Activated naive CD4-positive, alpha-beta T cell treated with anti-CD3 and anti-CD28 coated beads for 36 hours (primary cell): ENCODE measurements at regions of chr11 and their contacts with region 1.

Region 1: DNA sequence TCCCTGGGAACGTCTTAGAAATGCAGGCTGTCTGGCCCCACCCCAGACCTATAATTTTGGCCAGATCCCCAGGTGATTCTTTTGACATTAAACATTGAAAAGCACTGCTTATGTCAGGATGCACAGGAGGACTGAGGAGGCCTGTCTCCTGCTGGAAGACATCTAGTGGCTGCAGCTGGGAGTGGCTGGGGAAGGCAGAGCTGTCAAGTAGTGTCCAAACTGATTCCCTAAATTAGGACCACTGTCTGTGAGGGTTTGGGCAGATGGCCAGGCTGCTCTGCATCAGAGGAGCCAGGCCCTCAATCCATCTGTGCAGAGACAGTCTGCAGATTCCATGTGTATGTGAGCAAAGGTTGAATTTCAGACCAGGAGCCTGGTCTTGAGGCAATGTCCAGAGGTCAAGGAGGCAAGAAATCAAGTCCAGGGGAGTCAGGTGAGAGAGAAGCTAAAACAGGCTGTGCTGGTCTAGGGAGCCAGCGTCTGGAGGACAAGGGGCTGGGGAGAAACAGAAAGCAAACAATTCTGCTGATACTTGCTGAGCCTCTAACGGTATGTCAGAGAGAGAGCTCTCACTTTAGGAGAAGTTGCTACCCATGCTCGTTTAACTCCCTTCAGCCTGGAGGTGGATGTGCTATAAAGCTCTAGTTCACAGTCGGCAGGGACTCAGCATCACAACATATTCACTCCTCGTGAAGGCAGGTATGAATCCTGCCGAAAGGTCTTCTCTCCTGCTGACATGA is 15.3 kb upstream of the SYTL2 start:
- DNase-seq: peak; percentile 51
- H3K4me3 Mint-ChIP-seq: peak overlapping the region; percentile 28
- H3K27ac Mint-ChIP-seq: peak overlapping the region; percentile 20
- H3K4me1 Mint-ChIP-seq: peaks cover 57% of the 10 kb centered on the region
- H3K27me3 Mint-ChIP-seq: no peaks in the 10 kb centered on the region

Region 2: DNA sequence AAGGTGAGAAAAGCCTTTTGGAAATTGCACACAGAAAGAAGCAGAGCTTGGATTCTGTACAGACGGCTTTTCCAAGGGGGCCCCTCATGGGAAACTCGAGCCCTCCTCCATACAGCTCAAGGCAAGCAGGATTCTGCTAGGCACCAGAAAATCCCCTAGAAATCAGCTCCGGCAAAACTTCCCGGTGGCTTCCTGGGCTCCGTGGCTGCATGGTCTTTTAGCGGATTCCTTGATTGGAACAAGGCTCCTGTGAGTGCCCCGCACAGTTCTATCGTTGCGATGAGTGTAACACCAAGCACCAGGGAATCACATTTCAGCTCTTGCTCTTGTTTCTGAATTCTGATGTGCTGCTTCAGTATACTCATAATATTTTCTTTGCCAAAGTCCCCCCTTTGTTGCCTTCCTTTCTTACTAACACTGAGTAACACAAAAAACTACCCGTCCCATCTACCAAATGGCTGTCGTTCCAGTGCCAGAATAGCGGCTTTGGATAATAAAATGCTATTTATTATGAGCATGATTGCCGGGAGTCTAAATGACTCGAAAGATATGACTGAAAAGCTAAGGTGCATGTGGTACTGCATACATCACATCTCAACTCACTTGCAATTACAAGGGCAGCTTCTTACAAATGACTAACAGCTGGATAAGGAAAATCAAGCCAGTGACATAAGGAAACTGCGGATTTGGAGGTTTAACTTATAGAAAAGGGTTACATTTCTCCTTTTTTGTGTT is 693.3 kb before region 1 on chr11:
- CTCF ChIA-PET with region 1: no interaction called
- intact Hi-C with region 1: no loop called
- DNase-seq: no peak
- H3K4me3 Mint-ChIP-seq: no peak overlapping the region
- H3K27ac Mint-ChIP-seq: no peak overlapping the region
- H3K4me1 Mint-ChIP-seq: no peaks in the 10 kb centered on the region
- H3K27me3 Mint-ChIP-seq: no peaks in the 10 kb centered on the region

Region 3: DNA sequence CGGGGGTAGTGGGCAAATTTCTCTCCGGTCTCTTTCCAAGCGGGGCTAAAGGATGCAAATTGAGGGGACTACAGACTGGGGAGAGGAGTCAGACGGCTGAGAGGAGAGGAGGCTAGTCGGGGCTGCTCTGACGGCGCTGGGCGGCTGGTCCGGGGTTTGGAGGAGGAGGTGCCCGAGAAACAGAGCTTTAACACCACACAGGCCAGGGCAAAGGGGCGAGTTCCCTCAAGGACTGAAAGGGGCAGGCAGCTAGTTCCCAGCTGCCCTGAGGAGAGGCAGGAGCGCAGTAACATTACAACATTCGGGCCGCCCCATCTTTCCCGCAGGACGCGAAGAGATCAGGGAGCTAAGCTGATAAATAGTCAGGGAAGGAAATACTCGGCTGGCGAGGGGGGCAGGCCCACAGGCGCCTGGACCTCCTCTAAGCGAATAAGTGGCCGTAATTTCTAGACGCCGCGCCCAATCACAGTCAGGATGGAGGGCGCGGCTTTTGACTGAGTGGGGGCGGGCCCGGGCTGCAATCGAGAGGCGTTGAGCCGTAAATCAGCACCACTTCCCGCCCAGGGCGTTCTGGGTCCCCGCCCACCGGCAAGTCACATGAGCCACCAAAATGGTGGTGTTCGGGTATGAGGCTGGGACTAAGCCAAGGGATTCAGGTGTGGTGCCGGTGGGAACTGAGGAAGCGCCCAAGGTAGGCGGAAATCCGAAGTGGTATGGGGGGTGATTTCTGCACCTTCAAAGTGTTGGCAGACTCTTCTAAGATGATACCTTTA is 198.1 kb before region 1 on chr11 and contains the start of gene TMEM126B:
- CTCF ChIA-PET with region 1: no interaction called
- intact Hi-C with region 1: loop called (anchors 1 kb)
- DNase-seq: peak; percentile 98
- H3K4me3 Mint-ChIP-seq: peak within 1 kb of the TSS; percentile 99
- H3K27ac Mint-ChIP-seq: peak within 1 kb of the TSS; percentile 96
- H3K4me1 Mint-ChIP-seq: peaks cover 33% of the 10 kb centered on the region
- H3K27me3 Mint-ChIP-seq: no peaks in the 10 kb centered on the region
- total RNA-seq, gene TMEM126B: 72.6 to 79.0 TPM

Region 4: GRCh38 chr11:85694386-85694980 is 131.8 kb before region 1 on chr11:
- CTCF ChIA-PET with region 1: interaction called, 4 read pairs
- intact Hi-C with region 1: loop called (anchors 2 kb)
- DNase-seq: peak; percentile 16
- H3K4me3 Mint-ChIP-seq: no peak overlapping the region
- H3K27ac Mint-ChIP-seq: no peak overlapping the region
- H3K4me1 Mint-ChIP-seq: peaks cover 22% of the 10 kb centered on the region
- H3K27me3 Mint-ChIP-seq: no peaks in the 10 kb centered on the region

Region 5: DNA sequence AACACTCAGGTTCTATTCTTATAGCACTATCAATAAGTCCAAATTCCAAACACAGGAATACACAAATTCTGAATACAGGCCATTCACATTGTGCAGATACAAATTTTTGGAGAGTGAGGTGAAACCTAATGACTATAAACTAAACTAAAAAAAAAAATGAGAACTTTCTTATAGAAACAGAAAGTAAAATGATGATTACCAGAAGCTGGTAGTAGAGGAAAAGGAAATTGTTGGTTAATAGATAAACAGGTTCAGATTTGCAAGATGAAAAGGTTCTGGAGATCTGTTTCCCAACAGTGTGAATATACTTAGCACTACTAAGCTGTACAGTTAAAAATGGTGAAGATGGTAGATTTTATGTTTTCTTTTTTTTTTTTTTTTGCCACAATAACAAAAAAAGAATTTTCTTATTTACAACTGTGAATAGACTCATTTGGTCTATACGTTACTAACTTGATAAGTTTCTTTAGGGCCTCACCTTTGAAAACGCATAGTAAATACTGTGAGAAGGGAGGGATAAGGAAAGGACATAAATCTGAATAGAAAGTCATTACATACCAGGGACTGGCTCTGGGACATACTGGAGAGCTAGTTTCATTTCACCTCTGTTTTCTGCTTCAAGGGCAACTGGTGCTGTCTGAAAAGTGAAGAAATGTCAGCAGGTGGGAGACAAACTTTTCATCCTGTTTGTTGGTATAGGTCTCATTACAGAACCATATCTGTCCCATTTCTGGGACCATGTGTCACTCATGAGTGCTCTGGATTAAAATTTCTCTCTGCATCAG is 126.1 kb before region 1 on chr11:
- CTCF ChIA-PET with region 1: interaction called, 4 read pairs
- intact Hi-C with region 1: loop called (anchors 1 kb)
- DNase-seq: no peak
- H3K4me3 Mint-ChIP-seq: no peak overlapping the region
- H3K27ac Mint-ChIP-seq: peak overlapping the region; percentile 36
- H3K4me1 Mint-ChIP-seq: peaks cover 35% of the 10 kb centered on the region
- H3K27me3 Mint-ChIP-seq: no peaks in the 10 kb centered on the region

Region 6: DNA sequence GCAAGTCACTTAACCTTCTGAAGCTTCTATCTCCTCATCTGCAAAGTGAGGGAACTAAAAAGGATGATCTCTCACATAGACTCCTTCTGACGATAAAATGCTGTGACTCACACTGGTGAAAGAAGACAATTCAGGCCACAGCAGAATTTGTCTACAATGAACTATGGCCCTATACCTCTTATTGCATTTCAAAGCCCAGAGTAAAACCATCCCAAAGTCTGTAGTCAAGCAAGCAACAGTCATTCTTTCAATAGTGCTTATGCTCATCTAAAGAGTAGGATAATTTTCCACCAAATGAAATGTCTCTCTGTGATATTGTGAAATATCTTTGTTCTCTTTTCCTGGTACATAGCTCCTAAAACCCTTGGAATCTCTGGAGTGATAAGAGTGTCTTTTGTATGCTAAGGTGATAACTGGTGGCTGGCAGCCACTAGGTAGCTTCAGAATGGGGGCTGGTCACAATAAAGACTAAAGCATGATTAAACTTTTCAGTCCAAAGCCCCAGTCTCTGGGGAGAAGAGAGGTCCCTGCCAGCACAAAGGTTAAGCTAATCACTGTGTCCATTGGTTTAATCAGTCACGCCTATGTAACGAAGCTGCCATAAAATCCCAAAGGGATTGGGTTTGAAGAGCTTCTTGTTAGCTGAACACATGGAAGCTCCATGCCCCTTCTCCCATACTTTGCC is 46.2 kb before region 1 on chr11:
- CTCF ChIA-PET with region 1: interaction called, 5 read pairs
- intact Hi-C with region 1: loop called (anchors 1 kb)
- DNase-seq: no peak
- H3K4me3 Mint-ChIP-seq: no peak overlapping the region
- H3K27ac Mint-ChIP-seq: no peak overlapping the region
- H3K4me1 Mint-ChIP-seq: peaks cover 25% of the 10 kb centered on the region
- H3K27me3 Mint-ChIP-seq: no peaks in the 10 kb centered on the region

Region 7: DNA sequence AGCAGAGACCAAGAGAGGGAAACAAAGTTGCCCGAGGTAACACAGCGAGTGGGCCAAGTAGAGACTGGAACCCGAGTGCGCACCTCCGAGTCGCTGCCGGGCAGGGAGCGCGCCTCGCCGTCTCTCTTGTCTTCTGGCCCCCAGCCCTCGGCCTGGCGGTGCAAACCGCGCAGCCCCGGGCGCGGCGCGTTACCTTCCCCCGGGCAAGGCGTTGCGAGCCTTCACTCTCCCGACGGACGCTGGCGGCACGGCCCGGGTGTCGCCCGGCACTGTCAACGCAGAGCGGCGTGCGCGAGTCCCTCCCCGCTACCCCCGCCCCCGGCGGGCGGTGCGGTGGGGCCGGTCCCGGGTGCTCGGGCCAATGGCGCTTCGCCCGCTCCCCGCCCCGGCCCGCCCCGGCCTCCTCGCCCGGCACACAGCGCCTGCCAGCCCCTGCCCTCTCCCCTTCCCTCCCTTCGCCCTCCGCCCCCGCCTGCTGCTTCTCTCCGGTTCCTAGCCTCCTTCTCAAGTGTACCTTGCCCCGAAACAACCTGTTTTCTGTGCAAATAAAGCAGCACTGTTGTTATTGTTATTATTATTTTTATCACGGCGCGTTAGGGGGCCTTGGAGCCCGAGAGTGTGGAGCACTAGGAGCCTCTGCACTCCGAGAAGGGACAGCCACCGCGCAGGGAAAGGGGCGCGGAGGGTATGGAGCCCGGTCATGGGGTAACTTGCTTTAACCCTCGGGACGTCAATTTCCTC is 15.2 kb before region 1 on chr11 and contains the start of gene SYTL2:
- CTCF ChIA-PET with region 1: interaction called, 11 read pairs
- intact Hi-C with region 1: loop called (anchors 1 kb)
- DNase-seq: peak; percentile 77
- H3K4me3 Mint-ChIP-seq: peak within 1 kb of the TSS; percentile 81
- H3K27ac Mint-ChIP-seq: no peak within 1 kb of the TSS
- H3K4me1 Mint-ChIP-seq: peaks cover 33% of the 10 kb centered on the region
- H3K27me3 Mint-ChIP-seq: no peaks in the 10 kb centered on the region
- total RNA-seq, gene SYTL2: 13.8 to 13.9 TPM